ENCODE measurements at regions of chr2 and their contacts with region 1.

Region 1: DNA sequence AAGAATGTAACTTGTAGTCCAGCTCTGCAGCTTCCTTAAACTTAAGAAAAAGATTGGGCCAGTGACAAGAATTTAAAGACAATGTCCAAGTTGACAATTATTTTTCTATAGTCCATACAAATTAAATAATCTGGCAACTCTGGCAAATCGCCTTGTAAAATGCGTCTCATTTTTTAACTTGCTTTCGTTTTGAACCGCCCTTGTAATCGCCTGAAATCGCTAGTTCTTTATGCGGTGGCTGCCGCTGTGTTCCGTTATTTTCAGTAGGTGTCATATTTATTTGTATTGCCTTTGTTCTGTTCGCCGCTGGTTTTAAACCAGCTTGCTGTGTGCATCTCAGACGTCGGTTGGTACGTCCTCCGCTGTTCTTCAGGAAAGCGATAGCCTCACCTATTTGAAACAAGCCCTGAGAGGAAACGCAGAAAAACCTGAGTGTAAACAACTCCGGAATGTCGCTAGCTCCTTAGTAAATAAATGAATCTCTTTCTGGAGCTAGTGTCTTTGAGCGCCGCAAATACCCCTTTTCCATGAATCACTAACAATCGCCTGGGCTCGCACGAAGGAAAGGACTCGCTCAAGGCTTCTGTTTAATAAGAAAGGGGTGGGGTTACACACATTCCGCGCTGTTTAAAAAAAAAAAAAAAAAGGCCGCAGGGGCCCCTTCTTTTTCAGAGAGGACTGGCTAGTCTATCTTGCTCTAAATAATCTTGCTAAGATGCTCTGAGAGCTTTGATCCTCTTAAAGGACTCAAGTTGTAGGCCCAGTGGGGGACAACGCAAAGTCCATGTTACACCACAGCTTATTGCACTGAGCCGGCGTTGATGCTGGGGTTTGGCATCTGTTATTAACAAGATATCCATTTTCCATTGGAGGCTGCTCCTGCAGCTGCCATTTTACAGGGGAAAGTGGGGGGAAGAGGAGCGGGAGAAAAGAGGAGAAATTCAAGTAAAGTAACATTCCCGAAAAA is 3.0 kb downstream of the HOXD8 start:
- DNase-seq: peak; percentile 23
- H3K4me3 Mint-ChIP-seq: peak overlapping the region; percentile 65
- H3K27ac Mint-ChIP-seq: no peak overlapping the region
- H3K4me1 Mint-ChIP-seq: peaks cover 29% of the 10 kb centered on the region
- H3K27me3 Mint-ChIP-seq: peaks cover 79% of the 10 kb centered on the region

Region 2: DNA sequence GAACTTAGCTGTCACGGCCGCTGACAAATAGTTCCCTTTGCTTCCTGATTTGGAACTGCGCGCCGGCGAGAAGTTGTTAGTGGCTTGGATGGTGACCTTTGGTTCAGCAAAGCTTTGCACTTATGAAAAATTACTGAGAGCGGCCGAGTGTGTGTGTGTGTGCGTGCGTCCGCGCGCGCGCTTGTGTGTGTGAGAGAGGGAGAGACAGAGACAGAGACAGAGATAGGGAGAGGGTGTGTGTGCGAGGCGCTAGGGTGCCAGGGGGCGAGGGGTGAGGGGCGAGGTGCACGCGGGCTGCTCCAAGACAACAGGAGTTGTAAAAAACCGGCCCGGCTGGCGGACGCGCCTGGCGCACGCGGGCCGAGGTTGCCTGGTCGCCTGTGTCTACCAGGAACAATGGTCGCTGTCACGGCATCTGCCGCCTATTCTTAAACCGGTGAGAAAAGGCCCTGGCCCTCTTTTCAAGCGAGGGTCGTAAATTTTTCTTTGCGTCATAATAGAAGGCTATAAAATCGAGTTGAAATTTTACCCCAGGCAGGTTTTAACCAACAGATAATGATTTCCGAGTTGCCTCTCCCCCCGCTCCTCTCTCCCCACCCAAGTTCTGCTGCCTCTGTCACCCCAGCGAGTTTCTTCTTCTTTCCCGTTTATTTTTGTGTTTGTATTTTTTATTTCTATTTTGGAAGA is 25.2 kb after region 1 on chr2:
- CTCF ChIA-PET with region 1: interaction called, 8 read pairs
- intact Hi-C with region 1: loop called (anchors 2 kb)
- DNase-seq: no peak
- H3K4me3 Mint-ChIP-seq: peak overlapping the region; percentile 32
- H3K27ac Mint-ChIP-seq: no peak overlapping the region
- H3K4me1 Mint-ChIP-seq: peaks cover 26% of the 10 kb centered on the region
- H3K27me3 Mint-ChIP-seq: peaks cover 74% of the 10 kb centered on the region

Region 3: DNA sequence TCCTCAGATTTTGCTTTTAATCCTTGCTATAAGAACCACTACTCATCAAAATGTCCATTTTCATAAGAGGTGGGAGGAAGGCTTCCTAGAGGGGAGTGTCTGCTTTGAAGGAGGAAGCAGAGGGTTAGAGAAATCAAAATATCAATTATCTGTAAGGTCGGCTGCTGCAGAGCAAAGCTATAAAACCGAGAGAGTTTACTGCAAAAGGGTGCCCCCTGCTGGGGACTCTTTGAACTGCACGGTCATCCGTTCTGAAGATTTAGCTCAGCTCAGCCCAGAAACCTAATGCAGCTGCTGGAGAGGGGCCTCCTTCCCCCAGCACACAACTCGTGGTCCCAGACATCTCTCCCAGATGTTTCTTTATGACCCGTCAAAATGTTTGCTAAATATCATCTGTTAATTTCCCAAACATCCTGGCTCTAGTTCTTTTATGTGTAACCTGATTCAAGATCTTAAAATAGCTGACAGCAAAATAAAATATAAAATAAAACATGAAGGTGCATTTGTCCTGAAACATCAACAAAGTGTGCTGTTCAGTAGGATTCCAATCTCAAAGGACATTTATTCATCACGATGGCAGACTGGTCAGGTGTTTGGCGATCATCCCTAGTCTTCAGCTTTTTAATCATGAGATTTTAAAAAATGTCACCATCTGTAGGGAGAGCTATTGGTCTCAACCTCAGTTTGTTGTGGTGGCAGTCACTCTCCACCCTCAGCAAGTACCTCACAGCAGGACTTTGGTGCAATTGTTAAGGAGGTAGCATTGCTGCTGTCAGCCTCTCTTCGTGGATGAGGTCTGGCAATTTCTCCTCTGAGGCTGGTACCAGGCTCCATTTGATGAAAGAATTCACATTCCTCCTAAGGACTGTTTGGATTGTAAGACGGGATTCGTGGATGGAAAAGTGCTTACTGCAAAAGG is 322.7 kb after region 1 on chr2:
- CTCF ChIA-PET with region 1: interaction called, 93 read pairs
- intact Hi-C with region 1: loop called (anchors 1 kb)
- DNase-seq: peak; percentile 92
- H3K4me3 Mint-ChIP-seq: no peak overlapping the region
- H3K27ac Mint-ChIP-seq: no peak overlapping the region
- H3K4me1 Mint-ChIP-seq: peaks cover 2% of the 10 kb centered on the region
- H3K27me3 Mint-ChIP-seq: peaks cover 37% of the 10 kb centered on the region

Measured in activated naive CD4-positive, alpha-beta T cell treated with anti-CD3 and anti-CD28 coated beads for 36 hours (primary cell).